Esophagus muscularis mucosa (tissue), 4 donors: ENCODE measurements at regions of chr5 and their contacts with region 1.

Region 1: GRCh38 chr5:66144074-66144833 is at the start of gene SREK1:
- DNase-seq: peak; percentile 98
- H3K4me3 ChIP-seq: peak within 1 kb of the TSS; percentile 74 to 87 (median 84)
- H3K27ac ChIP-seq: peak within 1 kb of the TSS; percentile 95 to 99 (median 98)
- H3K4me1 ChIP-seq: peaks cover 23 to 44% (median 43%) of the 10 kb centered on the region in 4 donors
- H3K27me3 ChIP-seq: no peaks in the 10 kb centered on the region
- CTCF ChIP-seq: no peak
- EP300 ChIP-seq: no peak
- POLR2A ChIP-seq: no peak
- total RNA-seq, gene SREK1: 29.9 to 51.9 (median 44.9) TPM

Region 2: DNA sequence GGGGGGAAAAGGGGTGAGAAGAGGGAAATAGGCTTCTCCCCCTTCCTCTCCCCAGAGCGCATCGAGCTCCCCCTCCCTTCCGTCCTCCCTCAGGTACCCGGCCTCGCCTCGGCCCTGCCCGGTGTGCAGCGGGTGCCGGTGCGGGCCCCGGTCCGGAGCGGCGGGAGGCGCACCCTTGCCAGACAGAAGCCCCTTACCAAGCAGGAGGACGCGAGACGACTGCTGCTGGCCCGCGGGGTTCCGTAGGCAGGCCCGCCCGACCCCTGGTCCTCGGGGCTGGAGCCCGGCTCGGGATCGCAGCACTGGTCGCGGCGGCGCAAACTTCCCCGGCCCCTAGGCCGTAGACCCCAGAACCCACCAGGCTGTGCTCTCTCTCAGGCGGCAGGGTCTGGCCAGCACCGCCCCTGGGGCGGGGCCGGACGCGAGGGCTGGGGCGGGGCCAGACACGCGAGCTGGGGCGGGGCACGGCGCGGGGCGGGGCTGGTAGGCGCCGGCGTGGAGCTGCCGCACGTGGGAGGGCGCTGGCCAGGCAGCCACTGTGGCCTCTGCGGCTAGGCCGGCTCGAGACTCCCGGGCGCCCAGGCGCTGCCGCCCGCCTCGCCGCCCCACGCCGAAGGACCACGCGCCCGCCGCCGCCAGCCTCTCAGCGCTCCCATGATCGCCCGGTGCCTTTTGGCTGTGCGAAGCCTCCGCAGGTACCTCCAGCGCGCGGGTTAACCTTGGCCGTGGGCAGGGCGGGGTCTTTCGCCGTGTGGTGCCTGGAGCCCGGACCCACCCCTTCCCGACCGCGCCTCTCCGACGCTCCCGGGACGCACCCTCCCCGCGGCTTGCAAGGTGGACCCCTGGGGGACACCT is 422.3 kb before region 1 on chr5 and contains the starts of genes NLN and SGTB:
- intact Hi-C with region 1: loop called (anchors 5 kb)
- DNase-seq: peak; percentile 95
- H3K4me3 ChIP-seq: peak within 1 kb of the TSS; percentile 77 to 99 (median 91)
- H3K27ac ChIP-seq: peak within 1 kb of the TSS; percentile 75 to 86 (median 80)
- H3K4me1 ChIP-seq: peaks cover 10 to 35% (median 28%) of the 10 kb centered on the region in 4 donors
- H3K27me3 ChIP-seq: no peaks in the 10 kb centered on the region
- CTCF ChIP-seq: no peak
- EP300 ChIP-seq: no peak
- POLR2A ChIP-seq: no peak
- total RNA-seq, gene NLN: 8.7 to 11.9 (median 9.1) TPM
- total RNA-seq, gene SGTB: 11.4 to 16.5 (median 14.4) TPM

Region 3: DNA sequence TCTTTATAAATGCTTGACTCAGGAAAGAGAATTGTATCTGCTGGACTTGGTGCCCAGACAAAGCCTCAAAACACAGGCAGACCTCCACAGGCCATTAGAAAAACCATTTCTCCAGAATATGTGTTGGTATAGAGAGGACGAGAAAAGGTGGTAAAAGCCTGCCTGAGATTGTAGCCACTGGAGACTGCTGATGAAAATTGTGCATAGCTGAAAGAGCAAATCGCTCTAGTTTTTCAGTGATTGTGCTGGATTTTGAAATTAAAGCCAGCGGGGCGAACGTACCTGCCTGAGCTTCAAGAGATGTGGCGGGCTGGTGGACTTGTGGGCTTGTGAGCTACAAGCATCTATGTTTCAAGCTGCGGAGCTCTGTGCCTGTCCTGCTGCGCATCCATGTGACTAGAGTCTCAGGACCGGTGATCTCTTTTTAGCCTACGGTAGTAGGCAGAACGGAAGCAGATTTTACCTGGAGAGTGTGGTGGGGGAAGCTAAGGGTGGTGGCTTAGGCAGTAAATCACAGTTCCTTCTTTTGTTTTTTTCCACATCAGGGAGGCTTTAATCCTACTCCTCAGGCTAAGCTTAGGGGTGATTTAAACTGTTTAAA is 193.5 kb after region 1 on chr5:
- intact Hi-C with region 1: no loop called
- DNase-seq: no peak
- H3K4me3 ChIP-seq: no peak overlapping the region
- H3K27ac ChIP-seq: no peak overlapping the region
- H3K4me1 ChIP-seq: peaks cover 0 to 4% (median 0%) of the 10 kb centered on the region in 4 donors
- H3K27me3 ChIP-seq: no peaks in the 10 kb centered on the region
- CTCF ChIP-seq: no peak
- EP300 ChIP-seq: no peak
- POLR2A ChIP-seq: no peak